Activated B cell treated with CpG ODN at 0.5 μM for 24 hours (primary cell): ENCODE measurements at regions of chr12 and their contacts with region 1.

Region 1: GRCh38 chr12:53344824-53345485 is 8.8 kb upstream of the SP7 start:
- DNase-seq: peak; percentile 61
- ATAC-seq: peak; percentile 90
- H3K4me3 Mint-ChIP-seq: peak overlapping the region; percentile 93
- H3K27ac Mint-ChIP-seq: peak overlapping the region; percentile 67
- H3K4me1 Mint-ChIP-seq: peaks cover 15% of the 10 kb centered on the region
- H3K27me3 Mint-ChIP-seq: peaks cover 6% of the 10 kb centered on the region
- CTCF ChIP-seq: no peak

Region 2: DNA sequence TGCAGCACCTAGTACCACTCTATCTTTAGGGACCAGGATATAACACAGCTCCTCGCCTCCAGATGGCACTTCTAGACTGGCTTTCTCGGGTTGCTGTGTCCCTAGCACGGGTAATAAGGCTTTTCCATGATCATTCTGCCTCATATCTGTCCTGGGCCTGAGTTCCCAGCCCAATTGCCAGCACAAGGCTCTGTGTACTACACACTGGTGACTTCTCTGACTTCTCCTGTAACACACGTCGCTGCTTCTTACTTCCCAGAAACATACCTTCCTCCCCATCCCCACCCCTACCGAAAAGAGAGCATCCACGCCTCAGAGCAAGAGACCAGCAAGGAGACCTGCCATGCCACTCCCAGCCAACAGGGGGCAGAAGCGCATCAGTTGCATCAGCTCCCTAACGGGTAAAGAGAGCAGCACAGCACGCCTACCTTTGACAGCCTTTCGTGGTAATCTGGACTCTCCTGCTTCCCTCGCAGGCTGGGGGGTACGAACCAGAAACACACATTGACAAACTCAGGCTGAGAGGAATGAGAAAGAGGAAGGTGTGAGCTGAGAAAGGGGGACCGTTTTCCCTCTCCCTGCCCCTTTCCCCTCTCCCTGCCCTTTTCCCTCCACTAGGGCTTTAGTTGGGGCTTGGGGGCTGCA is 185.6 kb before region 1 on chr12:
- CTCF ChIA-PET with region 1: interaction called, 10 read pairs
- POLR2A ChIA-PET with region 1: interaction called, 3 read pairs
- intact Hi-C with region 1: loop called (anchors 1 kb)
- DNase-seq: peak; percentile 78
- ATAC-seq: peak; percentile 100
- H3K4me3 Mint-ChIP-seq: no peak overlapping the region
- H3K27ac Mint-ChIP-seq: no peak overlapping the region
- H3K4me1 Mint-ChIP-seq: peaks cover 5% of the 10 kb centered on the region
- H3K27me3 Mint-ChIP-seq: no peaks in the 10 kb centered on the region
- CTCF ChIP-seq: peak; percentile 13

Region 3: DNA sequence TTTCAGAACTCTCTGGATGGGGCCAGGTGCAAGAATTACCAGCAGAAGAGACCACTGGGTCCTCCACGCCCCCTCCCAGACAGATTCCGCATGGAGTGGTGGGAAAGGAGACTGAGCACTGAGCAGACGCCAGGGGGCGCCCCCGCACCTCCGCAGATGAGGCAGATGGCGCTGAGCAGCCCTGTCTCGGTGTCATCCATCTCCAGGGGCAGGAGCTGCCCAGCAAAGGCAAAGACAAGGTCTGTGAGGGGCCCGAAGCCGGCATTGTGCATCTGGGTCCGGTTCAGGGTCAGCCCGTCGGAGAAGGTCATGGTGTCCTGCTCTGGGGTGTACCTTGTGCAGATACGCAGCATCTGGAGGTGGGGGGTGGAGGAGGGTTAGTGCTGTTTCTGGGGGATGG is 131.6 kb before region 1 on chr12:
- CTCF ChIA-PET with region 1: interaction called, 33 read pairs
- POLR2A ChIA-PET with region 1: no interaction called
- intact Hi-C with region 1: loop called (anchors 1 kb)
- DNase-seq: peak; percentile 82
- ATAC-seq: peak; percentile 75
- H3K4me3 Mint-ChIP-seq: no peak overlapping the region
- H3K27ac Mint-ChIP-seq: peak overlapping the region; percentile 6
- H3K4me1 Mint-ChIP-seq: peaks cover 76% of the 10 kb centered on the region
- H3K27me3 Mint-ChIP-seq: no peaks in the 10 kb centered on the region
- CTCF ChIP-seq: peak; percentile 49

Region 4: DNA sequence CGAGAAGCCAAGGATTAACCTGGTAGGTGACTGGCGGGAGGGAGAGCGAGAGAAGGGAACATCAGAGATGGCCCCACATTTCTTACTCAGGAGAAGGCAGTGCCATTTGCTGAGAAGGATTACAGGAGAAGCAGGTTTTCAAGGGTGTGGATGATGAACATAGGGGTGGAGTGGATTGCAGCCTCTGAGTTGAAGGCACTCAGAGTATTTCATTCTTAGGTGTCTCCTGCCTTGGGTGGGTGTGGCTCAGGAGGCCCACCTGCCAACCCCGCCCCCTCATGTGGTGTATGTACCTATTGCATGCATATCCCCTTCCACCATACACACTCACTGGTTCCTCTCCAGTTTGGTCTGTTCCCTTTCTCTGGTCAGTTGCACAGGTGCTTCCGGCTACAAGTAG is 70.5 kb before region 1 on chr12:
- CTCF ChIA-PET with region 1: no interaction called
- POLR2A ChIA-PET with region 1: no interaction called
- intact Hi-C with region 1: no loop called
- DNase-seq: no peak
- ATAC-seq: no peak
- H3K4me3 Mint-ChIP-seq: no peak overlapping the region
- H3K27ac Mint-ChIP-seq: no peak overlapping the region
- H3K4me1 Mint-ChIP-seq: no peaks in the 10 kb centered on the region
- H3K27me3 Mint-ChIP-seq: no peaks in the 10 kb centered on the region
- CTCF ChIP-seq: no peak

Region 5: GRCh38 chr12:53295070-53295890 is 49.7 kb before region 1 on chr12 and contains the start of gene PFDN5:
- CTCF ChIA-PET with region 1: interaction called, 7 read pairs
- POLR2A ChIA-PET with region 1: interaction called, 10 read pairs
- intact Hi-C with region 1: no loop called
- DNase-seq: peak; percentile 75
- ATAC-seq: peak; percentile 89
- H3K4me3 Mint-ChIP-seq: peak within 1 kb of the TSS; percentile 99
- H3K27ac Mint-ChIP-seq: peak within 1 kb of the TSS; percentile 97
- H3K4me1 Mint-ChIP-seq: peaks cover 48% of the 10 kb centered on the region
- H3K27me3 Mint-ChIP-seq: no peaks in the 10 kb centered on the region
- CTCF ChIP-seq: no peak
- total RNA-seq, gene PFDN5: 486 and 578 TPM in 2 replicates

Region 6: GRCh38 chr12:53427905-53428594 is 83.1 kb after region 1 on chr12:
- CTCF ChIA-PET with region 1: interaction called, 28 read pairs
- POLR2A ChIA-PET with region 1: no interaction called
- intact Hi-C with region 1: no loop called
- DNase-seq: no peak
- ATAC-seq: peak; percentile 57
- H3K4me3 Mint-ChIP-seq: no peak overlapping the region
- H3K27ac Mint-ChIP-seq: no peak overlapping the region
- H3K4me1 Mint-ChIP-seq: no peaks in the 10 kb centered on the region
- H3K27me3 Mint-ChIP-seq: no peaks in the 10 kb centered on the region
- CTCF ChIP-seq: no peak